Heart right ventricle (tissue), 16 donors: ENCODE measurements at regions of chr21 and their contacts with region 1.

Region 1: DNA sequence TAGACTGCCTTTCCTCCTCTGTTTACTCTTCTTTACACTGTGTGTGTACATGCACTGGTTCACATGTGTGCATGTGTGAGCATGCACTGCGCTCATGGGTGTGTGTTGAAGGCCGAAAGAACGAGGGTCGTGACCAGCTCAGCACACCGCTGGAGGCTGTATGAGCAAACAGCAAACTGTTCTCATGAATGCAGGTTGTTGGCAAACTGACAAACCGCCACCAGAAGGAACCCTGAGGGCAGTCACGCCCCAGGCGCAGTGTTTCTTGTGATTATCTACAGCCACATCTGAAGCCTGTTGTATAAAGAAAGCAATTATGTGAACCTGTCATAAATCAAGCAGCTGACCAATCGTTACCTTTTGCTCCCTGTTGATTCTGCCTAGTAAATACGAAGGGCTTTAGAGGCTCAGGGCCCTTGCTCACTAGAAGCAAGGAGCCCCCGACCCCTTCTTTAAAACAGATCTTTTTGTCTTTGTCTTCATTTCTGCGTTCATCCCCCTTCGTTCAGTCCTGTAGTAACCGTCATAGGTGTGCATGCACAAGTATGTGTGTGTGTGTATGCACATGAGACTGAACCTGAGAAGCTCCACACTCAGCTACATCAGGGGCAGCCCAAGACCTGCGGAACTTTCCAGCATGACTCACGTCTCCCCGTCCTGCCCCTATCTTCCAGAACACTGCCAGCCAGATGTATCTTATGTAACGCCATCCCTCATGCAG is 16.7 kb upstream of the RIPK4 start:
- DNase-seq: no peak
- ATAC-seq: no peak
- H3K4me3 ChIP-seq: no peak overlapping the region
- H3K27ac ChIP-seq: no peak overlapping the region
- H3K4me1 ChIP-seq: peaks cover 0 to 1% (median 0%) of the 10 kb centered on the region in 9 donors
- H3K27me3 ChIP-seq: peaks cover 4 to 76% (median 69%) of the 10 kb centered on the region in 7 donors
- CTCF ChIP-seq: no peak

Region 2: DNA sequence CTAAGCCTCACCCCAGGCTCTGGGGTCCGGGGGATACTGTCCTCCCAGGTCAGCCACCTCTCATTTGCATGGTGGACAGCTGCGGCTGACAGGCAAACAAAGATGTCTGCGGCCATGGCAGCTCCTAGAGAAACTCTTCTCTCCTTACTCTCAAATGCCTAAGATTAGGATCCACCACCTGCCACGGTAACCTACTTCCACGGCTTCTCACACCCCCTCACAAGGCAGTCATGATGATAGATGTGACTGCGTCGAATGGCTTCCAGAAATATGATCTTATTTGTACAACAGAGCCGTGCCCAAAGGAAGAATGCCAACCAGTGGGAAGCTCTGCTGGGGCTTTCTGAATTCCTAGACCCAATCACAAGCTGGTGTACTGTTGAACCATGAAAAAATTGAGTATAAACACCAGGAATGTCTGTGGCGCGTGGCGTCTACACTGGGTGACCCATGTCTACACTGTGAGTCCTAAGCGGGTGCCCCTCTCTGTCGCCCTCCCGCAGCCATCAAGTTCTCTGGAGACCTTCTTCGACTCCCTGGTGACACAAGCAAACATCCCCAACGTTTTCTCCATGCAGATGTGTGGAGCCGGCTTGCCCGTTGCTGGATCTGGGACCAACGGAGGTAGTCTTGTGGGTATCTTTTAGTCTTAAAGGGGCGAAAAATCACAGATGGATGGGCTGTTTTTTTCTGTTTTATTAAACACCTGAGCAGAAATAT is 542.1 kb before region 1 on chr21:
- intact Hi-C with region 1: no loop called
- DNase-seq: no peak
- ATAC-seq: no peak
- H3K4me3 ChIP-seq: no peak overlapping the region
- H3K27ac ChIP-seq: no peak overlapping the region
- H3K4me1 ChIP-seq: no peaks in the 10 kb centered on the region
- H3K27me3 ChIP-seq: no peaks in the 10 kb centered on the region
- CTCF ChIP-seq: no peak

Region 3: GRCh38 chr21:41283211-41283818 is 500.3 kb before region 1 on chr21:
- intact Hi-C with region 1: loop called in 6 of 10 experiments (anchors 2 to 10 kb)
- DNase-seq: peak in 1 of 2 donors; percentile 66
- ATAC-seq: peak; percentile 80 to 92 (median 89)
- H3K4me3 ChIP-seq: no peak overlapping the region
- H3K27ac ChIP-seq: no peak overlapping the region
- H3K4me1 ChIP-seq: peaks cover 0 to 11% (median 0%) of the 10 kb centered on the region in 9 donors
- H3K27me3 ChIP-seq: peaks cover 0 to 14% (median 5%) of the 10 kb centered on the region in 7 donors
- CTCF ChIP-seq: peak; percentile 53 to 85 (median 78)

Region 4: GRCh38 chr21:41328660-41329607 is 454.7 kb before region 1 on chr21:
- intact Hi-C with region 1: no loop called
- DNase-seq: no peak
- ATAC-seq: no peak
- H3K4me3 ChIP-seq: no peak overlapping the region
- H3K27ac ChIP-seq: no peak overlapping the region
- H3K4me1 ChIP-seq: no peaks in the 10 kb centered on the region
- H3K27me3 ChIP-seq: peaks cover 0 to 1% (median 0%) of the 10 kb centered on the region in 7 donors
- CTCF ChIP-seq: no peak

Region 5: DNA sequence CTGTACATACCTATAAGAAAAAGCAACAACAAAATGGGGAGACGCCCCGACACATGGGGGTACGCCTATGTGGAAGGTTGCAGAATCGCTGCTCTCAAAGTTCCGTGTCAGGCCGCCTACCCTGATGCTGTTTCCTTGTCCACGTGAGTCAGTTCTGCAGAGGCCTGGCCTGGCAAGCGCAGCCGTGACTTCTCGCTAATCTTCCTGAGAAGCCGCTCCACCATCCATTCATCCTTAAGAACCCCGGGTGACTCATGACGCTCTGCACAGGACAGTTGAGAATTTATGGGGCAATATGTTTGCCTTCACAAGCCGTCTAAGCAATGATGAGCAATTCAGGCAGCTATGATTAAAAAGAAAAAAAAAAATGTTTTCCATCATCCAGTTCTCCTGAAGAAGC is 153.4 kb before region 1 on chr21:
- intact Hi-C with region 1: no loop called
- DNase-seq: no peak
- ATAC-seq: no peak
- H3K4me3 ChIP-seq: no peak overlapping the region
- H3K27ac ChIP-seq: no peak overlapping the region
- H3K4me1 ChIP-seq: no peaks in the 10 kb centered on the region
- H3K27me3 ChIP-seq: peaks cover 0 to 26% (median 15%) of the 10 kb centered on the region in 7 donors
- CTCF ChIP-seq: no peak